ENCODE measurements at regions of chr12 and their contacts with region 1.

Region 1: DNA sequence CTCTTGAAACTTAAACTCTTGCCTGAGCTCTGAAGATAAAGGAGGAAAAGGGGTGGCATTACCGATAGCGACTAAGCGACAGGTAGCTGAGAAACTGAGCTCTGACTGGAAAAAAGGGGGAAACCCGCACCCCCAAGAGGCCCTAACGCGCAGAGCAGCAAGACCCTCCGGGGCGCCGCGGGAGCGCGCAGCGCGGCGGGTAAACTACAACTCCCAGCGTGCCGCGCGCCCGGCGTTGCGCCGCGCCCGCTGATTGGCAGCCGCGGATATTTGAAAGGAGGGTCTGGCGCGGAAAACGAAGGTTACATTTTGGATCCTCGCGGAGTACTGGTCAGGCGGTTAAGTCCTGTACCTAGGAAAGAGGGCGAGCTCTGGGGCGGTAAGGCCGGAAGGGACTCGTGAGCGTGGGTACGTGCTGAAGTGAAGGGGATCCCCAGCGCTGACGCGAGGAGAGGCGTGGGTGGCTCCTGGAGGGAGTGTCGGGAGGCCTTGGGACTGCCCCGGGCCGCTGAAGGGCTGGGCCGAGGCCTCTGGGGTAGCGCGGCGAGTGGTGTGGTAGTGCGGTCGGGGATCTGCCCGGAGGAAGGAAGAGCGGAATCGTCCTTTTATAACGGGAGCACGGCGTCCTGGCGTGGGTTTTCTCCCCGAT is at the start of gene ESPL1:
- DNase-seq: peak; percentile 95
- H3K4me3 Mint-ChIP-seq: peak within 1 kb of the TSS; percentile 99
- H3K27ac Mint-ChIP-seq: peak within 1 kb of the TSS; percentile 99
- H3K4me1 Mint-ChIP-seq: peaks cover 22% of the 10 kb centered on the region
- H3K27me3 Mint-ChIP-seq: no peaks in the 10 kb centered on the region
- total RNA-seq, gene ESPL1: 53.3 to 54.2 TPM

Region 2: DNA sequence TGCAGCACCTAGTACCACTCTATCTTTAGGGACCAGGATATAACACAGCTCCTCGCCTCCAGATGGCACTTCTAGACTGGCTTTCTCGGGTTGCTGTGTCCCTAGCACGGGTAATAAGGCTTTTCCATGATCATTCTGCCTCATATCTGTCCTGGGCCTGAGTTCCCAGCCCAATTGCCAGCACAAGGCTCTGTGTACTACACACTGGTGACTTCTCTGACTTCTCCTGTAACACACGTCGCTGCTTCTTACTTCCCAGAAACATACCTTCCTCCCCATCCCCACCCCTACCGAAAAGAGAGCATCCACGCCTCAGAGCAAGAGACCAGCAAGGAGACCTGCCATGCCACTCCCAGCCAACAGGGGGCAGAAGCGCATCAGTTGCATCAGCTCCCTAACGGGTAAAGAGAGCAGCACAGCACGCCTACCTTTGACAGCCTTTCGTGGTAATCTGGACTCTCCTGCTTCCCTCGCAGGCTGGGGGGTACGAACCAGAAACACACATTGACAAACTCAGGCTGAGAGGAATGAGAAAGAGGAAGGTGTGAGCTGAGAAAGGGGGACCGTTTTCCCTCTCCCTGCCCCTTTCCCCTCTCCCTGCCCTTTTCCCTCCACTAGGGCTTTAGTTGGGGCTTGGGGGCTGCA is 108.8 kb before region 1 on chr12:
- CTCF ChIA-PET with region 1: interaction called, 21 read pairs
- intact Hi-C with region 1: no loop called
- DNase-seq: peak; percentile 97
- H3K4me3 Mint-ChIP-seq: no peak overlapping the region
- H3K27ac Mint-ChIP-seq: peak overlapping the region; percentile 6
- H3K4me1 Mint-ChIP-seq: peaks cover 7% of the 10 kb centered on the region
- H3K27me3 Mint-ChIP-seq: no peaks in the 10 kb centered on the region

Region 3: GRCh38 chr12:53205747-53206419 is 62.2 kb before region 1 on chr12:
- CTCF ChIA-PET with region 1: interaction called, 141 read pairs
- intact Hi-C with region 1: no loop called
- DNase-seq: peak; percentile 88
- H3K4me3 Mint-ChIP-seq: peak overlapping the region; percentile 65
- H3K27ac Mint-ChIP-seq: peak overlapping the region; percentile 79
- H3K4me1 Mint-ChIP-seq: peaks cover 75% of the 10 kb centered on the region
- H3K27me3 Mint-ChIP-seq: no peaks in the 10 kb centered on the region

Region 4: DNA sequence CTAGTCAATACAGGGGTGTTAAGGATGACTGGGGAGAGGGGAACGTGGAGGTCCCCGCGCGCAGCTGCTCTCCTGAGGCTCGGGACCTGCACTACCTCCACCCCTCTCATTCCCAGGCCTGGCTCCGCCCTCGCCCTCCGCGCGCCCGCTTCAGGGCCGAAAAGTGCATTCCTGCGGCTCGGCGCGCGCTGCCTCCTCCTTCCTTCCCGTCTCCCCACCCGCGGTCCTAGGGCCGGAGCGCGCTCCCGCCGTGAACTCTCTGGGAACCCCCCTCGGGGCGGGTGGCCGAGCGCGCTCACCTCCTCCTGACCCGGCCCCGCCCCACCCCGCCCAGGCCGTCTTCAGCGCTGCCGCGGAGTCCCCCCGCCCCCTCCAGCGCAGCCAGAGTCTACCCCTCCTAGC is 47.3 kb before region 1 on chr12:
- CTCF ChIA-PET with region 1: interaction called, 141 read pairs
- intact Hi-C with region 1: loop called (anchors 1 kb)
- DNase-seq: peak; percentile 80
- H3K4me3 Mint-ChIP-seq: peak overlapping the region; percentile 90
- H3K27ac Mint-ChIP-seq: peak overlapping the region; percentile 92
- H3K4me1 Mint-ChIP-seq: peaks cover 72% of the 10 kb centered on the region
- H3K27me3 Mint-ChIP-seq: no peaks in the 10 kb centered on the region

Region 5: DNA sequence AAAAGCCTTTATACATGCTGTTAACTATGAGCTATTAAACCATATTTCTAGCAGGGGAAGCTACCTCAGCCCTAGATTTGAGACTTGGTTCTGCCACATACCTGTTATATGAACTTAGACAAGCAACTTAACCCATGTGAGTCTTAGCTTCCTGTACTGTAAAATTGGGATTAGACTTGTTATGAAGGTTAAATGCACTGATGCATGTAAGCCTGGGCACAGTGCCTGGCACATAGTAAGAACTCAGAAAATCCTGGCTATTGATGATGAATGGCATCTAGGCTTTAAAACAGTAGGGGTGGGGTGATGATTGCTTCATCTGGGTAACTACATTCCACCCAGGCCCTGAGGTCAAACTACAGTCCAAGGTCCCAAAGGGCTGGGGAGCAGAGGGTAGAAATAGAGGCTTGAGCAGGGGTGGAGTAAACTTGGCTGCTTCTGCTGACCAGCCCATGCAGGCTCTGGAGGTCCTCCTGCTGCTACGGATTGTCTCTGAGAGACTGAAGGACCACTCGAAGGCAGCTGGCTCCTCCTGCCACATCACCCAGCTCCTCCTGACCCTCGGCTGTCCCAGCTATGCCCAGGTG is 11.3 kb after region 1 on chr12:
- CTCF ChIA-PET with region 1: interaction called, 66 read pairs
- intact Hi-C with region 1: no loop called
- DNase-seq: no peak
- H3K4me3 Mint-ChIP-seq: no peak overlapping the region
- H3K27ac Mint-ChIP-seq: no peak overlapping the region
- H3K4me1 Mint-ChIP-seq: no peaks in the 10 kb centered on the region
- H3K27me3 Mint-ChIP-seq: no peaks in the 10 kb centered on the region

Region 6: GRCh38 chr12:53295070-53295890 is 27.2 kb after region 1 on chr12 and contains the start of gene PFDN5:
- CTCF ChIA-PET with region 1: interaction called, 66 read pairs
- intact Hi-C with region 1: loop called (anchors 1 kb)
- DNase-seq: peak; percentile 94
- H3K4me3 Mint-ChIP-seq: peak within 1 kb of the TSS; percentile 98
- H3K27ac Mint-ChIP-seq: peak within 1 kb of the TSS; percentile 95
- H3K4me1 Mint-ChIP-seq: peaks cover 53% of the 10 kb centered on the region
- H3K27me3 Mint-ChIP-seq: no peaks in the 10 kb centered on the region
- total RNA-seq, gene PFDN5: 376 to 383 TPM

Region 7: GRCh38 chr12:53441040-53441833 is 173.1 kb after region 1 on chr12 and contains the start of gene PRR13:
- CTCF ChIA-PET with region 1: no interaction called
- intact Hi-C with region 1: no loop called
- DNase-seq: peak; percentile 100
- H3K4me3 Mint-ChIP-seq: peak within 1 kb of the TSS; percentile 90
- H3K27ac Mint-ChIP-seq: peak within 1 kb of the TSS; percentile 98
- H3K4me1 Mint-ChIP-seq: peaks cover 38% of the 10 kb centered on the region
- H3K27me3 Mint-ChIP-seq: no peaks in the 10 kb centered on the region
- total RNA-seq, gene PRR13: 207 to 216 TPM

Region 8: DNA sequence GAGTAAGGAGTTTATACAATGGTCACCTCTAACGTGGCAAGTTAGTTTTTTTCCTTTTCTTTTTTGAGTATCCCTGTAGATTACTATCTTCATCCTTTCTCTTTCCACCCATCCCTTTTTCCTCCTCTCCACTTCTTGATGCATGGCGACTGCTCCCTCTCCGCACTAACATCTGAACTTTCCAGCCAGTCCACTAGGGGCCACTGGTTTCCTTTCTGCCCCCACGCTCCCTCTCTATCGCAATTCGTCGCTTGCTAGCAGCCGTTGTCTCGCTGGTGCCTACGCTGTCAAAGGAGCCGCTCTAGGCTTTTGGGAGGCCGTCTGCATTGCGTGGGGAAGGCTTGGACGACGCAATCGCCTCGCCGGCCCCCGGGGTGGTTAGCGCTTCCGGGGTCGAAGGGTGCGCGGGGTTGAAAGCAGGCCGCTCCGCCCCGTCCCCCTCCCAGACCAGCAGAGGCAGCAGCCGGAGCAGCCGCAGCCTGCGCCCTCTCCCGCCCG is 183.6 kb after region 1 on chr12 and contains the start of gene PCBP2:
- CTCF ChIA-PET with region 1: interaction called, 3 read pairs
- intact Hi-C with region 1: loop called (anchors 1 kb)
- DNase-seq: peak; percentile 99
- H3K4me3 Mint-ChIP-seq: peak within 1 kb of the TSS; percentile 99
- H3K27ac Mint-ChIP-seq: peak within 1 kb of the TSS; percentile 99
- H3K4me1 Mint-ChIP-seq: peaks cover 36% of the 10 kb centered on the region
- H3K27me3 Mint-ChIP-seq: no peaks in the 10 kb centered on the region
- total RNA-seq, gene PCBP2: 1,085 to 1,132 TPM